ENCODE measurements at regions of chr10 and their contacts with region 1.

Region 1: DNA sequence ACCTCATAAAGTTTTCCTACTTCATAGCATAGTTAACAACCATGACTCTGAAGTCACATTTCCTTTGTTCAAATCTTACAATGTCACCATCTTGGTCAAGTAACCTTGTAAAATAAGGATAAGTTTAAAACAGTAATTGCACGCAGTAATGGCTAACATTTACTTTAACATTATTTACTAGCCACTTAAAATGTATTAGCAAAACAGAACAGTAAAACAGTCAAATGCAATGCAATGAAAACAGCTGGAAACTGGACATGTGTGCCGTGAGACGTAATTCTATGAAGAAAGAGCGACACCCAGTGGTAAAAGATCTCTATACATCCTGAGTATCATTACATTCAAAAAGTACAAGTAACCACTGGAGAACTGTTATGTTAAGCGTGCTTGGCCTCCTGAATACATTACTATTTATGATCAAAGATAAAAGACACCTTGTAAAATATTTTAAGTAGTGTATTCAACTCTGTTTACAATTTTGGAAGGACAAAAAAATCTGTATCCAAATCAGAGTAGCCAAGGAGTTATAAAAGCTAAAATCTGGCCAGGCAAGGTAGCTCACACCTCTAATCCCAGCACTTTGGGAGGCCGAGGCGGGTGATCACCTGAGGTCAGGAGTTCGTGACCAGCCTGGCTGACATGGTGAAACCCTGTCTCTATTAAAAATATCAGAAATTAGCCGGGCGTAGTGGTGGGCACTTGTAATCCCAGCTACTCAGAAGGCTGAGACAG is 27.2 kb downstream of the ATE1 start:
- DNase-seq: peak in 4 of 5 donors; percentile 20 to 38 (median 23)
- H3K4me3 ChIP-seq: no peak overlapping the region
- H3K4me3 Mint-ChIP-seq: peak overlapping the region in 1 of 8 donors; percentile 10
- H3K27ac ChIP-seq: no peak overlapping the region
- H3K27ac Mint-ChIP-seq: peak overlapping the region in 1 of 7 donors; percentile 62
- H3K4me1 ChIP-seq: no peaks in the 10 kb centered on the region
- H3K4me1 Mint-ChIP-seq: peaks cover 0 to 7% (median 3%) of the 10 kb centered on the region in 4 donors
- H3K27me3 ChIP-seq: no peaks in the 10 kb centered on the region
- H3K27me3 Mint-ChIP-seq: no peaks in the 10 kb centered on the region

Region 2: GRCh38 chr10:120942806-120943413 is 957.7 kb before region 1 on chr10:
- CTCF ChIA-PET with region 1: interaction called, 7 read pairs
- POLR2A ChIA-PET with region 1: no interaction called
- intact Hi-C with region 1: loop called (anchors 1 kb)
- DNase-seq: peak; percentile 52 to 64 (median 61)
- H3K4me3 ChIP-seq: no peak overlapping the region
- H3K4me3 Mint-ChIP-seq: peak overlapping the region in 6 of 8 donors; percentile 6 to 64 (median 38)
- H3K27ac ChIP-seq: no peak overlapping the region
- H3K27ac Mint-ChIP-seq: peak overlapping the region in 1 of 7 donors; percentile 4
- H3K4me1 ChIP-seq: peaks cover 4% of the 10 kb centered on the region
- H3K4me1 Mint-ChIP-seq: peaks cover 0 to 6% (median 5%) of the 10 kb centered on the region in 4 donors
- H3K27me3 ChIP-seq: no peaks in the 10 kb centered on the region
- H3K27me3 Mint-ChIP-seq: peaks cover 4 to 7% of the 10 kb centered on the region in 2 donors

Region 3: GRCh38 chr10:121886997-121887622 is 13.5 kb before region 1 on chr10:
- CTCF ChIA-PET with region 1: interaction called, 38 read pairs
- POLR2A ChIA-PET with region 1: no interaction called
- intact Hi-C with region 1: no loop called
- DNase-seq: peak in 4 of 5 donors; percentile 17 to 26 (median 24)
- H3K4me3 ChIP-seq: no peak overlapping the region
- H3K4me3 Mint-ChIP-seq: no peak overlapping the region
- H3K27ac ChIP-seq: no peak overlapping the region
- H3K27ac Mint-ChIP-seq: peak overlapping the region in 1 of 7 donors; percentile 52
- H3K4me1 ChIP-seq: no peaks in the 10 kb centered on the region
- H3K4me1 Mint-ChIP-seq: peaks cover 0 to 5% (median under 1%) of the 10 kb centered on the region in 4 donors
- H3K27me3 ChIP-seq: no peaks in the 10 kb centered on the region
- H3K27me3 Mint-ChIP-seq: no peaks in the 10 kb centered on the region

Measured in CD4-positive, alpha-beta memory T cell (primary cell).